Lower lobe of right lung (tissue), 2 donors: ENCODE measurements at regions of chr4 and their contacts with region 1.

Region 1: GRCh38 chr4:77862478-77863216 is at the start of gene MRPL1:
- DNase-seq: peak; percentile 93
- ATAC-seq: peak; percentile 98
- H3K4me3 ChIP-seq: peak within 1 kb of the TSS; percentile 79
- H3K27ac ChIP-seq: peak within 1 kb of the TSS; percentile 97
- H3K4me1 ChIP-seq: peaks cover 11% of the 10 kb centered on the region
- H3K27me3 ChIP-seq: no peaks in the 10 kb centered on the region
- CTCF ChIP-seq: no peak
- total RNA-seq, gene MRPL1: 25.8 TPM

Region 2: GRCh38 chr4:77911842-77912450 is 49.3 kb after region 1 on chr4:
- intact Hi-C with region 1: loop called (anchors 10 kb)
- DNase-seq: no peak
- ATAC-seq: peak in 1 of 2 donors; percentile 43
- H3K4me3 ChIP-seq: no peak overlapping the region
- H3K27ac ChIP-seq: no peak overlapping the region
- H3K4me1 ChIP-seq: no peaks in the 10 kb centered on the region
- H3K27me3 ChIP-seq: no peaks in the 10 kb centered on the region
- CTCF ChIP-seq: no peak